CD4-positive, alpha-beta memory T cell (primary cell): ENCODE measurements at regions of chr4 and their contacts with region 1.

Region 1: DNA sequence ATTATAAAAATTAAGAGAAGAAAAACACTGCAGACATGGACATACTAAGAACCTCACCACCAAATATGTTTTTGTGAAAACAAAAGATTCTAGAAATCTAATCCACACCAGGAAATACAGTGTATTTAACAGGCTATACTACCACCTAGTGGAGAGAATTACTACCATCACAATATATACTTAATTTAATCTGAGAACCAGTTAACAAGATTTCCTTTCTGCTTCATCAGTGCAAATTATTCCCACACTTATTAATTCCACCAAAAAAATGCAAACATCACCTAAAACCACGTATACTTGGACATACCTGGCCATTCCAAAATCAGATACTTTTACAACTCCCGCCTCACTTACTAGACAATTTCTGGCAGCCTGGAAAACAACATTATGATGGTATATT is 7.0 kb upstream of the TXK start:
- DNase-seq: peak in 4 of 5 donors; percentile 52 to 60 (median 54)
- H3K4me3 ChIP-seq: no peak overlapping the region
- H3K4me3 Mint-ChIP-seq: no peak overlapping the region
- H3K27ac ChIP-seq: no peak overlapping the region
- H3K27ac Mint-ChIP-seq: no peak overlapping the region
- H3K4me1 ChIP-seq: peaks cover 46% of the 10 kb centered on the region
- H3K4me1 Mint-ChIP-seq: peaks cover 42 to 52% (median 46%) of the 10 kb centered on the region in 4 donors
- H3K27me3 ChIP-seq: no peaks in the 10 kb centered on the region
- H3K27me3 Mint-ChIP-seq: no peaks in the 10 kb centered on the region

Region 2: GRCh38 chr4:47914220-47914925 is 226.7 kb before region 1 on chr4 and contains the start of gene NFXL1:
- CTCF ChIA-PET with region 1: interaction called, 3 read pairs
- POLR2A ChIA-PET with region 1: interaction called, 4 read pairs
- intact Hi-C with region 1: loop called (anchors 5 kb)
- DNase-seq: peak; percentile 93 to 97 (median 94)
- H3K4me3 ChIP-seq: peak within 1 kb of the TSS; percentile 89 to 100
- H3K4me3 Mint-ChIP-seq: peak within 1 kb of the TSS; percentile 94 to 99 (median 98)
- H3K27ac ChIP-seq: peak within 1 kb of the TSS; percentile 75
- H3K27ac Mint-ChIP-seq: peak within 1 kb of the TSS; percentile 93 to 99 (median 96)
- H3K4me1 ChIP-seq: peaks cover 23% of the 10 kb centered on the region
- H3K4me1 Mint-ChIP-seq: peaks cover 22 to 41% (median 28%) of the 10 kb centered on the region in 4 donors
- H3K27me3 ChIP-seq: no peaks in the 10 kb centered on the region
- H3K27me3 Mint-ChIP-seq: no peaks in the 10 kb centered on the region
- total RNA-seq, gene NFXL1: 16.6 to 21.1 TPM

Region 3: DNA sequence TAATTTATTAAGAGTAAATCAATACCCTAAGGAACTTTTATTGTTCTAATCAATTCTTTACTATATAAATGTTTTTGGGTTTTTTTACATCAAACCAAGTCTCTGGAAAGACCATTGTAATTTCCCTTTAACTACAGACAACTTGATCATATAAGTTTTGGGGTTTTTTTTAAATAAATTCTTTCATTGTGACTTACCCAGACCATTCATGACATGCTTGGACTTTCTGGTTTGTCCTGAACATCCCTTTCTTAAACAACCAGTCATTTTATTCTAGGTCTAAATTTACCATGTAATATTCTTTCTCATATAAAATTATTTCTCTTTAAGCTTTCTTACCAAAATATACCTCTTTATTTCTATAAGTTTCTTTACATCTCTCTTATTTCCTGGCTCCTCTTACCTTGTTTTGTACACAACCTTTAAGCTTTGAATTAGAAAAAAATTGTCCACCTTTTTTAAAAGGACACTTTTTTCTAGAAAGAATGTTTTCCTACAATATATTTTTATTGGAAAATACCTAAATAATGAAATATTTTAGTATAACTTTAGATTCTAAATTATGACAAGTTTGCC is 132.9 kb before region 1 on chr4:
- CTCF ChIA-PET with region 1: no interaction called
- POLR2A ChIA-PET with region 1: no interaction called
- intact Hi-C with region 1: loop called (anchors 1 kb)
- DNase-seq: no peak
- H3K4me3 ChIP-seq: no peak overlapping the region
- H3K4me3 Mint-ChIP-seq: no peak overlapping the region
- H3K27ac ChIP-seq: no peak overlapping the region
- H3K27ac Mint-ChIP-seq: no peak overlapping the region
- H3K4me1 ChIP-seq: no peaks in the 10 kb centered on the region
- H3K4me1 Mint-ChIP-seq: peaks cover 0 to 2% (median 0%) of the 10 kb centered on the region in 4 donors
- H3K27me3 ChIP-seq: no peaks in the 10 kb centered on the region
- H3K27me3 Mint-ChIP-seq: peaks cover 1 to 8% of the 10 kb centered on the region in 2 donors

Region 4: GRCh38 chr4:48109413-48110263 is 31.4 kb before region 1 on chr4:
- CTCF ChIA-PET with region 1: interaction called, 27 read pairs
- POLR2A ChIA-PET with region 1: interaction called, 7 read pairs
- intact Hi-C with region 1: loop called (anchors 1 kb)
- DNase-seq: peak in 4 of 5 donors; percentile 42 to 50 (median 48)
- H3K4me3 ChIP-seq: no peak overlapping the region
- H3K4me3 Mint-ChIP-seq: no peak overlapping the region
- H3K27ac ChIP-seq: no peak overlapping the region
- H3K27ac Mint-ChIP-seq: peak overlapping the region in 3 of 7 donors; percentile 7 to 52 (median 11)
- H3K4me1 ChIP-seq: peaks cover 38% of the 10 kb centered on the region
- H3K4me1 Mint-ChIP-seq: peaks cover 25 to 35% (median 31%) of the 10 kb centered on the region in 4 donors
- H3K27me3 ChIP-seq: no peaks in the 10 kb centered on the region
- H3K27me3 Mint-ChIP-seq: no peaks in the 10 kb centered on the region

Region 5: DNA sequence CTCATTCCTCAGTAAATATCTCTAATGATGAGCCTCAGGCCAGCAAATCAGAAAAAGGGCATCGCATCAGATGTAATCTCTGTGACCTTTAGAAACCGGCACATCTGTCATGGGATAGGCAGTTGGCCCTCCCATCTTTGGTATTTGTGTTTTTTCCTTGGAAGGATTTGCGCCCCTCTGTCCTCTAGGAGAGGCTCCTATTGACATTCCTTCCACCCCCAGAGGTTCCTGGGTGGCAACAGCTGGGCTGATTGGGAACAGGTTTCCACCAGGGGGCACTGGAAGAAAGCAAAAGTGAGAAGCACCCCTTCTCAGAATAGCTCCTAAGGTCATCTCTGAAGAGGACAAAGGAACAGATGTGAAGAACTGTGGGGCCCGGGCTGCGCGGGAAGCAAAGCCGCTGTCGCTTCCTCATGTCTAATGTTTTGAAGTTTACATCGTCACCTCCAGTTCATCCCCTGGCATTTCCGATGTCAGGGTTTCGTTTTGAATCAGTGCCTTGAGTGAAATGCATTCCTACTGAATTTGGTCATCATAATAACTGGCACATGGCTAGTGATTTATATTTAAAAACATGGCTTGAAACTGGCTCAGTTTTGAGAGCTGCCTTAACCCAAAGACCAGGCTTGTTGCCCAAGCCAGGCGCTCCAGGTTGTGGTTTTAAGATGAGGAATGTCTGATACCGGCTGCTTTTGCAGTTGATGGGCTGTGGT is 13.2 kb before region 1 on chr4:
- CTCF ChIA-PET with region 1: interaction called, 313 read pairs
- POLR2A ChIA-PET with region 1: interaction called, 145 read pairs
- intact Hi-C with region 1: loop called (anchors 1 kb)
- DNase-seq: peak; percentile 61 to 72 (median 69)
- H3K4me3 ChIP-seq: peak overlapping the region; percentile 0 to 41
- H3K4me3 Mint-ChIP-seq: peak overlapping the region; percentile 71 to 95 (median 84)
- H3K27ac ChIP-seq: peak overlapping the region; percentile 46
- H3K27ac Mint-ChIP-seq: peak overlapping the region; percentile 78 to 96 (median 94)
- H3K4me1 ChIP-seq: peaks cover 89% of the 10 kb centered on the region
- H3K4me1 Mint-ChIP-seq: peaks cover 65 to 98% (median 83%) of the 10 kb centered on the region in 4 donors
- H3K27me3 ChIP-seq: no peaks in the 10 kb centered on the region
- H3K27me3 Mint-ChIP-seq: no peaks in the 10 kb centered on the region

Region 6: GRCh38 chr4:48227659-48228058 is 86.6 kb after region 1 on chr4:
- CTCF ChIA-PET with region 1: no interaction called
- POLR2A ChIA-PET with region 1: no interaction called
- intact Hi-C with region 1: no loop called
- DNase-seq: no peak
- H3K4me3 ChIP-seq: no peak overlapping the region
- H3K4me3 Mint-ChIP-seq: no peak overlapping the region
- H3K27ac ChIP-seq: no peak overlapping the region
- H3K27ac Mint-ChIP-seq: no peak overlapping the region
- H3K4me1 ChIP-seq: no peaks in the 10 kb centered on the region
- H3K4me1 Mint-ChIP-seq: no peaks in the 10 kb centered on the region
- H3K27me3 ChIP-seq: no peaks in the 10 kb centered on the region
- H3K27me3 Mint-ChIP-seq: no peaks in the 10 kb centered on the region

Region 7: DNA sequence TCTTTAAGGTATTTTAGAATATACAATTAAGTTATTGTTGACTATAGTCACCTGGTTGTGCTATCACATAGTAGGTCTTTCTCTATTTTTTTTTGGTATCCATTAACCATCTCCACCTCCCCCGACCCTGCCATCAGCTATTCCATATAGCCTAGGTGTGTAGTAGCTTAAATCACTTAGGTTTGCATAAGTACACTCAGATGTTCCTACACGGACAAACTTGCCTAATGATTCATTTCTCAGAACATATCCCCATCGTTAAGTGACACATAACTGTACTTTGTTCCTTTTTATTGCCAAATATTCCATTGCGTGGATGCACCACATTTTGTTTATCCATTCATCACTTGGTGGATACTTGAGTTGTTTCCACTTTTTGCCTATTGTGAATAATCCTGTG is 268.2 kb after region 1 on chr4:
- CTCF ChIA-PET with region 1: no interaction called
- POLR2A ChIA-PET with region 1: no interaction called
- intact Hi-C with region 1: no loop called
- DNase-seq: no peak
- H3K4me3 ChIP-seq: no peak overlapping the region
- H3K4me3 Mint-ChIP-seq: no peak overlapping the region
- H3K27ac ChIP-seq: no peak overlapping the region
- H3K27ac Mint-ChIP-seq: peak overlapping the region in 2 of 7 donors; percentile 1 to 47
- H3K4me1 ChIP-seq: no peaks in the 10 kb centered on the region
- H3K4me1 Mint-ChIP-seq: peaks cover 7 to 18% (median 9%) of the 10 kb centered on the region in 4 donors
- H3K27me3 ChIP-seq: no peaks in the 10 kb centered on the region
- H3K27me3 Mint-ChIP-seq: no peaks in the 10 kb centered on the region